Activated CD8-positive, alpha-beta memory T cell treated with anti-CD3 and anti-CD28 coated beads, Interleukin-2, amount 10 ng/mL, durations not matched to agents 7 days and 5 days (primary cell): ENCODE measurements at regions of chr20 and their contacts with region 1.

Region 1: GRCh38 chr20:45044084-45044573 is 56.8 kb downstream of the KCNS1 start:
- DNase-seq: peak; percentile 66
- ATAC-seq: peak; percentile 87
- H3K4me3 Mint-ChIP-seq: no peak overlapping the region
- H3K27ac Mint-ChIP-seq: peak overlapping the region; percentile 83
- H3K4me1 Mint-ChIP-seq: peaks cover 50% of the 10 kb centered on the region
- H3K27me3 Mint-ChIP-seq: no peaks in the 10 kb centered on the region

Region 2: GRCh38 chr20:44960103-44960852 is 83.9 kb before region 1 on chr20 and contains the start of gene TOMM34:
- CTCF ChIA-PET with region 1: interaction called, 12 read pairs
- DNase-seq: peak; percentile 96
- ATAC-seq: peak; percentile 96
- H3K4me3 Mint-ChIP-seq: peak within 1 kb of the TSS; percentile 85
- H3K27ac Mint-ChIP-seq: peak within 1 kb of the TSS; percentile 95
- H3K4me1 Mint-ChIP-seq: peaks cover 71% of the 10 kb centered on the region
- H3K27me3 Mint-ChIP-seq: no peaks in the 10 kb centered on the region
- total RNA-seq, gene TOMM34: 22.3 to 31.2 TPM

Region 3: GRCh38 chr20:45061244-45061643 is 17.1 kb after region 1 on chr20:
- CTCF ChIA-PET with region 1: interaction called, 57 read pairs
- DNase-seq: no peak
- ATAC-seq: no peak
- H3K4me3 Mint-ChIP-seq: no peak overlapping the region
- H3K27ac Mint-ChIP-seq: no peak overlapping the region
- H3K4me1 Mint-ChIP-seq: peaks cover 57% of the 10 kb centered on the region
- H3K27me3 Mint-ChIP-seq: no peaks in the 10 kb centered on the region

Region 4: GRCh38 chr20:45070932-45071632 is 27.0 kb after region 1 on chr20:
- CTCF ChIA-PET with region 1: interaction called, 17 read pairs
- DNase-seq: no peak
- ATAC-seq: no peak
- H3K4me3 Mint-ChIP-seq: no peak overlapping the region
- H3K27ac Mint-ChIP-seq: peak overlapping the region; percentile 31
- H3K4me1 Mint-ChIP-seq: peaks cover 1% of the 10 kb centered on the region
- H3K27me3 Mint-ChIP-seq: no peaks in the 10 kb centered on the region

Region 5: GRCh38 chr20:45077559-45077958 is 33.4 kb after region 1 on chr20:
- CTCF ChIA-PET with region 1: interaction called, 12 read pairs
- DNase-seq: no peak
- ATAC-seq: no peak
- H3K4me3 Mint-ChIP-seq: no peak overlapping the region
- H3K27ac Mint-ChIP-seq: no peak overlapping the region
- H3K4me1 Mint-ChIP-seq: no peaks in the 10 kb centered on the region
- H3K27me3 Mint-ChIP-seq: no peaks in the 10 kb centered on the region

Region 6: GRCh38 chr20:45111799-45112471 is 67.8 kb after region 1 on chr20:
- CTCF ChIA-PET with region 1: interaction called, 26 read pairs
- DNase-seq: no peak
- ATAC-seq: no peak
- H3K4me3 Mint-ChIP-seq: no peak overlapping the region
- H3K27ac Mint-ChIP-seq: no peak overlapping the region
- H3K4me1 Mint-ChIP-seq: peaks cover 3% of the 10 kb centered on the region
- H3K27me3 Mint-ChIP-seq: peaks cover 3% of the 10 kb centered on the region